ENCODE measurements at regions of chr9 and their contacts with region 1.

Region 1: DNA sequence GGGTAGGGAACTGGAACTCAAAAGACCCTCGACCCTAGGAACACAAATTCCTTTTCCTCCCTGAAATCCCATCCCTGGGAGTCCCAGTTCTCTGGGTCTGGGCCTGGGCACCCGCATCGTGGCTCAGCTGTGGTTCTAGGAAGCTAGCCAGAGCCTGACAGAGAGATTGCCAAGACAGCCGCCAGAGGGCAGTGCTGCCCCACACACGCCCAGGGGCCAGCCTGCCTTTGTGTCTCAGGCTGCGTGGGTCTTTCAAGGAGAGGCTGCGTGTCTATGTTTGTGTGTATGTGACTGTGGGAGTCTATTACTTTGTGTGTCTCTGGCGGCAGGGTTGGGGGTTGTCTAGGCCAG is 32.0 kb upstream of the TTLL11 start:
- DNase-seq: peak; percentile 17
- H3K4me3 ChIP-seq: no peak overlapping the region
- CTCF ChIP-seq: peak; percentile 93

Region 2: GRCh38 chr9:122028089-122028488 is 97.0 kb before region 1 on chr9:
- CTCF ChIA-PET with region 1: no interaction called
- POLR2A ChIA-PET with region 1: no interaction called
- DNase-seq: no peak
- H3K4me3 ChIP-seq: no peak overlapping the region
- CTCF ChIP-seq: no peak

Region 3: GRCh38 chr9:122078557-122078956 is 46.6 kb before region 1 on chr9:
- CTCF ChIA-PET with region 1: no interaction called
- POLR2A ChIA-PET with region 1: no interaction called
- DNase-seq: no peak
- H3K4me3 ChIP-seq: no peak overlapping the region
- CTCF ChIP-seq: no peak

Region 4: GRCh38 chr9:122107291-122107805 is 17.8 kb before region 1 on chr9:
- CTCF ChIA-PET with region 1: interaction called, 123 read pairs
- POLR2A ChIA-PET with region 1: no interaction called
- DNase-seq: no peak
- H3K4me3 ChIP-seq: no peak overlapping the region
- CTCF ChIP-seq: no peak

Region 5: GRCh38 chr9:122307925-122308324 is 182.8 kb after region 1 on chr9:
- CTCF ChIA-PET with region 1: interaction called, 11 read pairs
- POLR2A ChIA-PET with region 1: no interaction called
- DNase-seq: no peak
- H3K4me3 ChIP-seq: no peak overlapping the region
- CTCF ChIP-seq: no peak

Region 6: GRCh38 chr9:122356627-122357026 is 231.5 kb after region 1 on chr9:
- CTCF ChIA-PET with region 1: interaction called, 831 read pairs
- POLR2A ChIA-PET with region 1: no interaction called
- DNase-seq: no peak
- H3K4me3 ChIP-seq: no peak overlapping the region
- CTCF ChIP-seq: peak; percentile 34

Region 7: GRCh38 chr9:122445155-122445749 is 320.1 kb after region 1 on chr9:
- CTCF ChIA-PET with region 1: interaction called, 19 read pairs
- POLR2A ChIA-PET with region 1: no interaction called
- DNase-seq: peak; percentile 47
- H3K4me3 ChIP-seq: no peak overlapping the region
- CTCF ChIP-seq: no peak

Region 8: DNA sequence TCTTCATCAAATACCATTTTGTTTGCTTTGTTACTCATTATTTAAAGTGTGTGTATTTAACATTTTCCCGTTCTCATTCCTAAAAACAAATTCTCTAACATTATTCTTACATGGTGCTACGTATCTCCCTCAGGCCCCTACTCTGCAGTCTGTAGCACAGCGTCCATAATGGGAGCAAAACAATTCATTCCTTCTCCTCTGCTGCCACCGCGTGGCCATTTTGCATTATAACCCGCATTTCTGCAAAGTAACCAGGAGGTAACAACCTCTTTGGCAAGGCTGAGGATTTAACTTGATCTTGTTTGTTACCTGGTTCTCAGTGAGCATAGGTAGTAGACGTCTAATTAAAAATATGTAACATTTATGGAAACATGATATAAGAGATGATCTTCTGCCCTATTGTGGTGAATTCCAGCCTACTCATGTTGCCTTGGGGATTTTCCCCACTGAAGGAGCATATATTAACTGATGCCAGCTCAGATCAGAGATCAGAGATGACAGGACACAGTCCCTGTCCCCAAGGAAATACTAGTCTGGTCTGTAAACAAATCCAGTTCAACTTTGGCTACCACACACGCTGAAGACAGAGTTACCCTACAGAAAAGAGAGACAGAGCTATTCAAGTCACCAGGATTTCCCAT is 685.3 kb after region 1 on chr9:
- CTCF ChIA-PET with region 1: interaction called, 70 read pairs
- POLR2A ChIA-PET with region 1: no interaction called
- DNase-seq: no peak
- H3K4me3 ChIP-seq: no peak overlapping the region
- CTCF ChIP-seq: peak; percentile 65